Tibial artery (tissue), 4 donors: ENCODE measurements at regions of chr5 and their contacts with region 1.

Region 1: DNA sequence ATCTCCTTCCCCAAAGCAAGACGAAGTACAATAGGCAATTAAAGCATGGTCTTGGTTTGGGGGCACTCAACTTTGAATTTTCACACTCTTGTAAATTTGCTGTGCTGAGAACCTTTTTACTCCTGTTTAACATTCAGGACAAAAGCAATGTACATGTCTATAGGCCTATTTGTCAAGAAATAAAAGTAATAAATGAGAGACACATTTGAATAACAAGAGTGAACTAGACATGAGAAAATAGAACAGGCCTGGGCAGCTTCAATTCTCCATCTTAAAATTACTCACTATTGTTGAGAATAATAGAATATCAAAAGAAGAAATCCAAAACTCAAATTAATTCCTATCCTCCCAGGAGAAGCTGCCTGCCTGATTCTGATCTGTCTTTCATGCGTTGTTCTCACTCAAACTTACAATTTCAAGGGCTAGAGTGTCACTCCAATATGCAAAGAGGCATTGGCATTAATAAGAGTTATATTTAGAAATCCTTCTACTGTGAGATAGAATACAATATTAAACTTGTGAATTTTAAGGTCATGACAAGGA is 192.9 kb upstream of the CCNG1 start:
- DNase-seq: no peak
- H3K4me3 ChIP-seq: no peak overlapping the region
- H3K27ac ChIP-seq: no peak overlapping the region
- H3K4me1 ChIP-seq: no peaks in the 10 kb centered on the region
- H3K27me3 ChIP-seq: no peaks in the 10 kb centered on the region
- CTCF ChIP-seq: no peak

Region 2: GRCh38 chr5:163106098-163106497 is 138.4 kb before region 1 on chr5:
- intact Hi-C with region 1: loop called (anchors 5 kb)
- DNase-seq: no peak
- H3K4me3 ChIP-seq: no peak overlapping the region
- H3K27ac ChIP-seq: no peak overlapping the region
- H3K4me1 ChIP-seq: no peaks in the 10 kb centered on the region
- H3K27me3 ChIP-seq: no peaks in the 10 kb centered on the region
- CTCF ChIP-seq: no peak